GM10248 (cell line): ENCODE measurements at regions of chr11 and their contacts with region 1.

Region 1: DNA sequence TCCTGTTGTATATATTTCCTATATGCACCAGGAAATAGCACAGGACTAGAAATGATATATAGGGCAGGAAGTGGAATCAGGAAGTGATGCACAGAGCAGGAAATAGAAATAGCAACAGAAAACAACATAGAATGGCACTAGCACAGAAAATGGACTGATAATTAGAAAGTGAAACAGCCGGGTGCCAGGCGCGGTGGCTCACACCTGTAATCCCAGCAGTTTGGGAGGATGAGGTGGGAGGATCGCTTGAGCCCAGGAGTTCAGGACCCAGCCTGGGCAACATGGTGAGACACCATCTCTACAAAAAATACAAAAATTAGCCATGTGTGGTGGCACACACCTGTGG is 10.0 kb upstream of the RELT start:
- DNase-seq: no peak
- CTCF ChIP-seq: no peak

Region 2: DNA sequence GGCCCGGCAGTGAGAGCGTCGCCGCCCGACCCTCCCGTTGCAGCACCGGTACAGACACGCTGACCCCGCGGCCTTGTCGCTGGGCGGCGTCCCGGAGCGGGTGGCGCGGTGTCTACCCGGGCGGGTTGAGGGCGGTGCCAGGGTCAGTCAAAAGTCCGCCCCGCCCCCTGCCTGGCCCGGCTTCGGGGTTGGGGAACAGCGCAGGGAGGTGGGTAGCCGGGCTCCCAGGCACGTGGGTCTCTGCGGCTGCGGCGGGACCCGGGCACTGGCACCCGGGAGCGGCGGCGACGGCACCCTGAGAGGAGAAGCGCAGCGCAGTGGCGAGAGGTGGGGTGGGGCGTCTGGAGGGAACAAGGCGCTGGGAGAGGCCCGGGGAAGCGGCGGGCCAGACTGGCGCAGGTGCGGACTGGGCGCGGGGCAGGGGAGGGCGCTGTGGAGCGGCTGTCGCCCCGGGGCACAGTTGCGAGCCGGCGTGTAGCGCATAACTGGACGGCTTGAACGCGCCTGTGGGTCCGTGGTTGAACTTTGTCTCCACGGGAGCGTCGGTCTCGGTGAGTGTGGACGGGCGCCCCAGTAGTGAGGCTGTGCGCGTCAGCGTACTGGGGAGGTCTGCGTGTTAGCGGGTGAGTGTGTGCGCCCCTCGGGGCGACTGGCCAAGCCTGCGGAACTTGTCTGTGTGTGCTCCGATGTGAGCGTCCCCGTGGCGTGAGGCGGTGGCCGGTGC is 148.0 kb before region 1 on chr11 and contains the start of gene P2RY2:
- CTCF ChIA-PET with region 1: no interaction called
- POLR2A ChIA-PET with region 1: no interaction called
- DNase-seq: peak; percentile 58
- CTCF ChIP-seq: peak; percentile 43

Region 3: GRCh38 chr11:73376160-73376802 is 10.0 kb after region 1 on chr11 and contains the start of gene RELT:
- CTCF ChIA-PET with region 1: interaction called, 16 read pairs
- POLR2A ChIA-PET with region 1: interaction called, 5 read pairs
- DNase-seq: peak; percentile 98
- CTCF ChIP-seq: peak; percentile 88